SK-N-SH (cell line): ENCODE measurements at regions of chr3 and their contacts with region 1.

Region 1: GRCh38 chr3:87350364-87351199 is 74.2 kb upstream of the POU1F1 start:
- DNase-seq: peak; percentile 46
- H3K4me3 ChIP-seq: no peak overlapping the region; a peak in 1 of 4 replicates
- H3K27ac ChIP-seq: no peak overlapping the region
- H3K4me1 ChIP-seq: no peaks in the 10 kb centered on the region; a peak in 1 of 4 replicates
- H3K27me3 ChIP-seq: peaks cover 13% of the 10 kb centered on the region; the same call in 1 of the 2 replicates
- CTCF ChIP-seq: peak; percentile 96
- EP300 ChIP-seq: no peak
- RAD21 ChIP-seq: peak; percentile 68

Region 2: GRCh38 chr3:87247430-87247773 is 103.2 kb before region 1 on chr3:
- CTCF ChIA-PET with region 1: no interaction called
- POLR2A ChIA-PET with region 1: no interaction called
- DNase-seq: no peak
- H3K4me3 ChIP-seq: no peak overlapping the region
- H3K27ac ChIP-seq: no peak overlapping the region
- H3K4me1 ChIP-seq: no peaks in the 10 kb centered on the region
- H3K27me3 ChIP-seq: no peaks in the 10 kb centered on the region
- CTCF ChIP-seq: no peak
- EP300 ChIP-seq: no peak
- RAD21 ChIP-seq: no peak

Region 3: GRCh38 chr3:87260270-87260669 is 90.3 kb before region 1 on chr3:
- CTCF ChIA-PET with region 1: no interaction called
- POLR2A ChIA-PET with region 1: no interaction called
- DNase-seq: peak; percentile 15
- H3K4me3 ChIP-seq: no peak overlapping the region
- H3K27ac ChIP-seq: no peak overlapping the region
- H3K4me1 ChIP-seq: peaks cover 0 to 5% of the 10 kb centered on the region in 2 experiments; a peak in 1 of 4 replicates
- H3K27me3 ChIP-seq: no peaks in the 10 kb centered on the region
- CTCF ChIP-seq: peak; percentile 80
- EP300 ChIP-seq: no peak
- RAD21 ChIP-seq: peak; percentile 40

Region 4: DNA sequence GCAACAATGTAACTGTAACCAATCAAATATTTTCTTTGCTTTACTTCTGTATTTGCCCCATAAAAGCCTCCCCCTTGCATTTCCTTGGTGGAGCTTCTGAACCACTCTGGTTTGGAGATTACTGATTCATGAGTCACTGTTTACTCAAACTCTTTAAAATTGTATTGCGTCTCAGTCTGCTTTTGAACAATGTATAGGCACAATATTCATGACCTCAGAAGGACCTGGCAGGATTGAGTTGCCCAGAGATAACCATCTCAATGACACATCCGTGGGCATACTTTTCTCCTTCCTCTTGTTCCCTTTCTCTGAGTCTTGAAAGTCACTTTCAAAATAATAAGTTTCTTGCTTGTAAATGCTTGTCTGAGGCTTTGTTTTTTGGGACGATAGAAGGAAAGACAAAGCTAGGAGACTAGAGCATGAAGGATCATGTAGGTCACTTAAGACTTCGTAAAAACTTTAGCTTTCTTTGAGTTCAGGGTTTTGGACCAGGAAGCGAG is 17.1 kb before region 1 on chr3:
- CTCF ChIA-PET with region 1: interaction called, 14 read pairs
- POLR2A ChIA-PET with region 1: no interaction called
- DNase-seq: no peak
- H3K4me3 ChIP-seq: no peak overlapping the region; a peak in 1 of 4 replicates
- H3K27ac ChIP-seq: peak overlapping the region in 1 of 2 experiments; percentile 88; a peak in 2 of 4 replicates
- H3K4me1 ChIP-seq: no peaks in the 10 kb centered on the region; a peak in 1 of 4 replicates
- H3K27me3 ChIP-seq: no peaks in the 10 kb centered on the region
- CTCF ChIP-seq: no peak
- EP300 ChIP-seq: peak in 1 of 2 experiments; percentile 48; a peak in 1 of 4 replicates
- RAD21 ChIP-seq: no peak

Region 5: GRCh38 chr3:87361271-87361670 is 10.7 kb after region 1 on chr3:
- CTCF ChIA-PET with region 1: interaction called, 15 read pairs
- POLR2A ChIA-PET with region 1: no interaction called
- DNase-seq: no peak
- H3K4me3 ChIP-seq: no peak overlapping the region
- H3K27ac ChIP-seq: no peak overlapping the region
- H3K4me1 ChIP-seq: no peaks in the 10 kb centered on the region
- H3K27me3 ChIP-seq: peaks cover 12% of the 10 kb centered on the region
- CTCF ChIP-seq: no peak
- EP300 ChIP-seq: no peak
- RAD21 ChIP-seq: no peak

Region 6: GRCh38 chr3:87370007-87370406 is 19.4 kb after region 1 on chr3:
- CTCF ChIA-PET with region 1: interaction called, 16 read pairs
- POLR2A ChIA-PET with region 1: no interaction called
- DNase-seq: no peak
- H3K4me3 ChIP-seq: no peak overlapping the region
- H3K27ac ChIP-seq: no peak overlapping the region
- H3K4me1 ChIP-seq: no peaks in the 10 kb centered on the region
- H3K27me3 ChIP-seq: peaks cover 9% of the 10 kb centered on the region; the same call in 1 of the 2 replicates
- CTCF ChIP-seq: no peak
- EP300 ChIP-seq: no peak
- RAD21 ChIP-seq: no peak

Region 7: DNA sequence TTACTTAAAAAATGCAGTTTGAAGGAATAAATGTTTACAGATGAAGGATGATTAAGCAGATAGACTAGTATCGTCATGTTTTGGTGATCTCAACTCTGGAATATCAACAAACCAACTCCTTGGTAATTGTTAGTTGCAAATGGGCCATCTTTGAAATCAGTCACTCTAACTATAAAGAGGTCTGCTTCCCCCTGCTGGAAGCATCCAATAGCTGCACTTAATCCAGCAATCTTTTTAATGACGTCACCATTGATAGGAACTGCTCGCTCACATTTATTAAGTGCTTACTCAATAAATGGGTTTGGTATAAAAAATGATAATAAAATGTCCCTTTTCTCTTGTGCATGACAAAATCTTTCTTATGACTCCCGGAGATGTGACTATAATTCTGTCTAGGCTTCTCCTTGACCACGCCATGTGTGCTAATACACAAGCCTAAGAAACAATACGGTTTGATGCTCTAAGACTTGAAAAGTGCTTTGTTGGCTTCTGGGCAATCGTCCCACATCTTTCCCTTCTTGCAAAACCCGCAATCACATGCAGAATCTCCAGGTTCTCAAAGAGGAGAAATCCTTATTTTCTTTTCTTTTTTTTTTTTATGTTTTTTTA is 153.4 kb after region 1 on chr3:
- CTCF ChIA-PET with region 1: interaction called, 15 read pairs
- POLR2A ChIA-PET with region 1: no interaction called
- DNase-seq: peak; percentile 47
- H3K4me3 ChIP-seq: no peak overlapping the region; a peak in 1 of 4 replicates
- H3K27ac ChIP-seq: no peak overlapping the region
- H3K4me1 ChIP-seq: peaks cover 0 to 6% of the 10 kb centered on the region in 2 experiments; a peak in 1 of 4 replicates
- H3K27me3 ChIP-seq: peaks cover 6% of the 10 kb centered on the region; the same call in 1 of the 2 replicates
- CTCF ChIP-seq: peak; percentile 92
- EP300 ChIP-seq: no peak
- RAD21 ChIP-seq: peak; percentile 73

Region 8: GRCh38 chr3:88005066-88005465 is 654.5 kb after region 1 on chr3:
- CTCF ChIA-PET with region 1: interaction called, 21 read pairs
- POLR2A ChIA-PET with region 1: no interaction called
- DNase-seq: no peak
- H3K4me3 ChIP-seq: no peak overlapping the region
- H3K27ac ChIP-seq: no peak overlapping the region
- H3K4me1 ChIP-seq: peaks cover 0 to 3% of the 10 kb centered on the region in 2 experiments; a peak in 2 of 4 replicates
- H3K27me3 ChIP-seq: peaks cover 14% of the 10 kb centered on the region
- CTCF ChIP-seq: peak; percentile 57
- EP300 ChIP-seq: no peak
- RAD21 ChIP-seq: peak; percentile 56